ENCODE measurements at regions of chr9 and their contacts with region 1.

Region 1: DNA sequence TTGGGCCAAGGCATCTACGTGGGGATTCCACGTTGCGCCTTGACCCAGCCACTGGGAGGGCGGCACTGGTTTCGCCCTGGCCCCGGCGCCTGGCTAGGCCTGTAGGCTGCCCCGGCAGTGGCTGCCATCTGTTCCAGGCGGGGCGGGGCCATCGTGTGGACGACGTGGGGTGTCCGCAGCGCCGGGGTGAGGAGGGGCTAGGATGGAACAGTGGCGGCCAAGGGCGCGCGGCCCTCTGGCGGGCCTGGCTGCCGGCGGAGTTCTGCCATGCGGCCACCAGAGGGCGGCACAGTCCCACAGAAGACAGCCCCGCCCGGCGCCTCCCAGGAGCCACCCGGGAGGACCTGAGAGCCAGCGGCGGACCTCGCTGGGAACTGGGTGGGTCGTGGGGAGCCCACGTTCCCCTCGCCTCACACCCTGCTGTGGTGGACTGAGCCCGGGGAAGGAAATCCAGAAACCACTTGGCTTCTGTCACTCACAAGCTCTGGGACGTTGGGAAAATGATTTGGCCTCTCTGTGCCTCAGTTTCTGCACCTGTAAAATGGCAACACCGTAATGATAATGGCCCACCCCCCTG is 22.6 kb upstream of the RAPGEF1 start:
- DNase-seq: peak; percentile 82
- ATAC-seq: peak; percentile 99
- H3K4me3 ChIP-seq: no peak overlapping the region
- H3K4me3 Mint-ChIP-seq: no peak overlapping the region
- H3K27ac ChIP-seq: no peak overlapping the region
- H3K27ac Mint-ChIP-seq: no peak overlapping the region
- H3K4me1 ChIP-seq: peaks cover 6 to 8% of the 10 kb centered on the region in 2 donors
- H3K4me1 Mint-ChIP-seq: peaks cover 3% of the 10 kb centered on the region
- H3K27me3 ChIP-seq: peaks cover 0 to 15% (median 3%) of the 10 kb centered on the region in 4 experiments
- H3K27me3 Mint-ChIP-seq: peaks cover 11% of the 10 kb centered on the region
- CTCF ChIP-seq: peak; percentile 97

Region 2: DNA sequence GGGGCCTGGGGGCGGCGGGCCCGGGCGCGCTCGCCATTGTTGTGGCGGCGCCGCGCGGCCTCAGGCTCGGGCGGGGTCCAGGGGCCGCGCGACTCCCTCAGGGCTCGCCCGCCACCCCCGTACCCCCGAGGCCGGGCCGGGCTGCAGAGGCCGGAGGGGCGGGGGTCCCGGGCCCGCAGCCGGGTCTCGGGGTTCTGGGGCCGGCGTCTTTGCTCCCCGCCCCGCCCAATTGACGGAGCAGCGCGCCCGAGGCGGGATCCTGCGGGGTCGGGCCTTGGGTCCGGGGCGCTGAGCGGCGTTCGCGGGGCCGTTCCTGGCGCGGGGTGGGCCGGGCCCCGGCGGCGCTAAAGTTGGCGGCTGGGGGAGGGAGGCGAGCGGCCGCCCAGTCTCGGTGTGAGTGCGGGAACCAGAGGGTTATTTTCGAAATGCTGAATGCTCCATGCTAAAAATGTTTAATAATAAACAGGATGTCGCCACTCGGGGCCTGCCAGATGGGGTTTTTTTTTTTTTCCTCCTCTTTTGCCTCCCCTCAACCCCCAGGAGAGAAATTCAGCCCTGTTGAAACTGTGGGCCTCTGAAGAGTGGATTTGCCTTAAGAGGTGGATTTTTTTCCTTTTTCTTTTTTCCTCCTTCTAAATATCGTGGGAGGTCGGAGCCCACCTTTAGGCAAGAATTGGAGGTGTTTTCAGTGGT is 367.8 kb before region 1 on chr9:
- CTCF ChIA-PET with region 1: no interaction called
- POLR2A ChIA-PET with region 1: no interaction called
- intact Hi-C with region 1: no loop called
- DNase-seq: peak; percentile 74
- ATAC-seq: peak; percentile 22
- H3K4me3 ChIP-seq: peak overlapping the region; percentile 53 to 80 (median 72)
- H3K4me3 Mint-ChIP-seq: peak overlapping the region; percentile 88
- H3K27ac ChIP-seq: peak overlapping the region; percentile 74 to 82
- H3K27ac Mint-ChIP-seq: peak overlapping the region; percentile 90
- H3K4me1 ChIP-seq: peaks cover 42 to 49% of the 10 kb centered on the region in 2 donors
- H3K4me1 Mint-ChIP-seq: peaks cover 48% of the 10 kb centered on the region
- H3K27me3 ChIP-seq: no peaks in the 10 kb centered on the region
- H3K27me3 Mint-ChIP-seq: no peaks in the 10 kb centered on the region
- CTCF ChIP-seq: no peak

Region 3: DNA sequence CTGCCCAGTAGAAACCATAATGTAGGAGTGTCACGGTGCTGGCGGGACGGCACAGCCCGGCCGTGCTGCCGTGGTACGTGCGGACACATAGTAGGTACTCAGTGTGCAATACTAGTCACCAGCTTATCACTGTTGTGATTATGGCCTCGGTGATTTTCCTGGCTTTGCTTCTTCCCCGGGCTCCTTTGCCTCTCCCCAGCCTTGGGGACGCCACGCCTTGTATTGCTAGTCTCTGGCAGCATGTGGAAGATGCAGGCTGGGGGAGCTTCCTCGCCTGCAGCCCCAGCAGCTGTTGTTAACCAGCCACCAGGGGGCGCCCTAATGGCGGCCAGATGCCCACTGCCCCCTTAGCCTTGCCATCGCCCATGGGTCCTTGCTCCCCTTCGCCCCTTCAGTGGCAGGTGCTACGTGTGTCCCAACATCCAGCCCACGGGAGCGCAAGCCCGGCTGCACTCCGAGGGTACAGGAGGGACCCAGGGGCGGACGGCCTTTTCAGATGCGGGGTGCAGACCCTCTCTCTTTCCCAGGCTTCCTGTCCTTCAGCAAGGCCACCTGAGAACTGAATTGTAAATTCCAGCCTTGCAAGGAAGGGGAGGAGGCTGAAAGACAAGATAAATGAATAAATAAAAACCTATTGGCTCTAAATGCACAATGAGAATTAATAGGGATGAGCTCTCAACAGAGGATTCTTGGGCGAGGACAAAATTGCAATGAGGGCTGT is 407.4 kb after region 1 on chr9:
- CTCF ChIA-PET with region 1: interaction called, 3 read pairs
- POLR2A ChIA-PET with region 1: no interaction called
- intact Hi-C with region 1: loop called (anchors 10 kb)
- DNase-seq: peak; percentile 75
- ATAC-seq: peak; percentile 49
- H3K4me3 ChIP-seq: no peak overlapping the region
- H3K4me3 Mint-ChIP-seq: no peak overlapping the region
- H3K27ac ChIP-seq: no peak overlapping the region
- H3K27ac Mint-ChIP-seq: no peak overlapping the region
- H3K4me1 ChIP-seq: peaks cover under 1 to 2% of the 10 kb centered on the region in 2 donors
- H3K4me1 Mint-ChIP-seq: peaks cover under 1% of the 10 kb centered on the region
- H3K27me3 ChIP-seq: peaks cover 0 to 43% (median 17%) of the 10 kb centered on the region in 4 experiments
- H3K27me3 Mint-ChIP-seq: peaks cover 63% of the 10 kb centered on the region
- CTCF ChIP-seq: peak; percentile 95

Region 4: GRCh38 chr9:132268725-132269352 is 506.4 kb after region 1 on chr9:
- CTCF ChIA-PET with region 1: interaction called, 21 read pairs
- POLR2A ChIA-PET with region 1: no interaction called
- intact Hi-C with region 1: loop called (anchors 1 kb)
- DNase-seq: peak; percentile 77
- ATAC-seq: peak; percentile 51
- H3K4me3 ChIP-seq: no peak overlapping the region
- H3K4me3 Mint-ChIP-seq: no peak overlapping the region
- H3K27ac ChIP-seq: no peak overlapping the region
- H3K27ac Mint-ChIP-seq: peak overlapping the region; percentile 64
- H3K4me1 ChIP-seq: no peaks in the 10 kb centered on the region
- H3K4me1 Mint-ChIP-seq: peaks cover 2% of the 10 kb centered on the region
- H3K27me3 ChIP-seq: no peaks in the 10 kb centered on the region
- H3K27me3 Mint-ChIP-seq: no peaks in the 10 kb centered on the region
- CTCF ChIP-seq: peak; percentile 96